Activated naive CD8-positive, alpha-beta T cell treated with anti-CD3 and anti-CD28 coated beads, Interleukin-2, amount 10 ng/mL, durations not matched to agents 7 days and 5 days (primary cell): ENCODE measurements at regions of chr1 and their contacts with region 1.

Region 1: DNA sequence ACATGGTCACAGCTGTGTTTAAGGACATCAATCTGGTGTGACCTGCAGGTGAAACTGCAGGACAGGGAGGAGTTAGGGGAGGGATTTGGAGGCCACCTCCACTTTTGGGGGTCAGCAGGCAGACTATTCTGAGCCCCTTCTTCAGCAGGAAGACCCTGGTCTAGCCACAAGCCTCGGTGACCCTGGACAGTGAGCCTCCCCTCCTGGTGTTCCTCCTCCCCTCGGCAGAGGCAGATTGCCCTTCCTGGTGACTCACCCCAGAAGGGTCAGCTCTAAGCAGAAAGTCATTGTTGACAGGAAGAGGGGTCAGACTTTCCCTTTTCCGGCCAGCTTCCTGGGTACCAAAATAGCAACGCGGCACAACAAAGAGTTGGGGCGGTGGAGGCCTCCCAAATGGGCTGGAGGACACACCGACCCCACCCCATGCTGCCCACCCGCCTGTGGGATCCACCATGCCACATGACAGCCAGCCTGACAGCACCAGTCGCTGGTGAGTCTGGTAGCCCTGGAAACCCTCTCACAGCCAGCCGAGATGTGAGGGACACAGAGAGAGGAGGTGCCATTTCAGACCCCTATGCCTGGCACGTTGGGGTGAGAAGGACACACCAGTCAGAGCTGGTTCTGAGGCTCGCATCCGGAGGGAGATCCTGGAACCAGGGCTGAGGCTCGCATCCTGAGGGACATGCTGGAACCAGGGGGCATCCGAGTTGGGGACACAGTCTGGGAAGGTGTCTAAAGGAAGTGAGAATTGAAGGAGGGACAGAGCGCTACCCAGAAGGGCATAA is 14.7 kb upstream of the CSF1 start:
- DNase-seq: no peak
- ATAC-seq: peak; percentile 49
- H3K4me3 Mint-ChIP-seq: no peak overlapping the region
- H3K27ac Mint-ChIP-seq: no peak overlapping the region
- H3K4me1 Mint-ChIP-seq: peaks cover 15% of the 10 kb centered on the region
- H3K27me3 Mint-ChIP-seq: no peaks in the 10 kb centered on the region

Region 2: DNA sequence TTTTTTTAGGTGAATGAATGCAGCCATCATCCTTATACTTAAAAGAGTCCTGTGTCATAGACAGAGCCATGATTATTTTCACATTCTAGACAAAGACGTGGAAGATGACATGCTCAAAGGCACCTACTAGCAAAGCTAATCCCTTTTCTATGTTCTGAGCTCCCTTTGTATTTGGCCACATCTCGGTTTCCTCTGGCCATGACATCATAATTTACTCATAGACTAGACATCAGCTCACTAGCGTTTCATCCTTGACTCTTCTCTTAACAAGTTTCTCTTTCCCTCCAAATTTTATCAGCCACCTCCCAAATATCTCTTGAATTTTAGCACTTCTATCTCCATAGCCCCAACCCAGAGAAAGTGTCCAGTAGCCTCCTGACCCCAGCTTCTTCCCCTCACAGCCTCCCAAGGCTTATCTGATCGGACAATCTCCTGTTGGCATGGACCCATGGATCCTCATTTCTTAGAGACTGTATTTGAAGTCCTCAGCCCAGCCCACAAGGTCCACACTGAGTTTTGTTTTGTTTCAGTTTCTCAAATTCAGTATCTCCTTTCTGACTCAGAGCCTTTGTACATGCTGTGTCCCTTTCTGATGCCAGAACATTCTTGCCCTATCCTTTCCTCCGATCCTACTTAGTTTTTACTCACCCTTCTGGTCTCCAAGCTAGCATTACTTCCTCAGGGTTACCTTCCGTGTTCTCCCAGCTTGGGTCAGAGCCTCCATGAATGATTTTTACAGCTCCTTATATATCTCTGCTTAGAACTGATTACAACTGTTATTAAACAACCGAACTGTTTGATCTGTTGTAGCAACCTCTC is 99.2 kb before region 1 on chr1:
- POLR2A ChIA-PET with region 1: interaction called, 10 read pairs
- DNase-seq: peak; percentile 26
- ATAC-seq: peak; percentile 56
- H3K4me3 Mint-ChIP-seq: peak overlapping the region; percentile 63
- H3K27ac Mint-ChIP-seq: peak overlapping the region; percentile 92
- H3K4me1 Mint-ChIP-seq: peaks cover 76% of the 10 kb centered on the region
- H3K27me3 Mint-ChIP-seq: no peaks in the 10 kb centered on the region

Region 3: GRCh38 chr1:109917768-109918606 is 22.1 kb after region 1 on chr1:
- POLR2A ChIA-PET with region 1: no interaction called
- DNase-seq: no peak
- ATAC-seq: no peak
- H3K4me3 Mint-ChIP-seq: no peak overlapping the region
- H3K27ac Mint-ChIP-seq: peak overlapping the region; percentile 45
- H3K4me1 Mint-ChIP-seq: peaks cover 40% of the 10 kb centered on the region
- H3K27me3 Mint-ChIP-seq: no peaks in the 10 kb centered on the region